ENCODE measurements at regions of chr7 and their contacts with region 1.

Region 1: DNA sequence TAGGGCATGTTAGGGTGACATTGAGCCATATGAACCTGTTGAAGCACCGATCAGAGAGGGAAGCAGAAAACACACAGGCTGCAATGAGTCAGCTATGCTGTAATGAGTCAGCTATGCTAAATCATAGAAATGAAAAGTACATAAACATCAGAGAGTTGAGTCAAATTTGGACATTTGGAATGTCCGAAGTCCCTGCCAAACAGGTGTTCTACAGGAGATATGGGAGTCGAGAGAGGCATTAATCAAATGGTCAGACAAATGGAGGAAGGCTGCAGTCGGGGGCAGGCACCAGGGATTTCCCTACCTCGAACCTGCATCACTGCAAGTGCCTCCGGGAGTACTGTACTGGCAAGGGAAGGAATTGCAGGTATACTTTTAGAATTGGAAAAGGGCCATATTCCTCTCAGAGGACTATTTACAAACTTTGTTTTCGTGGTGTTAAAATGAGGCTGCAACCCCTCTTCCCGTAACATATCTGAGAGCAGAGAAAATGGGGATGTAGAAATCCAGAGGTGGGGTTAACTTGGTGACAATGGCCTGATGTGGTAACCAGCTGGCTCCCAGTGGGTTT is 8.8 kb upstream of the ZC3HAV1 start:
- DNase-seq: peak in 2 of 14 experiments; percentile 39 to 55
- ATAC-seq: no peak
- H3K4me3 ChIP-seq: no peak overlapping the region
- H3K4me3 Mint-ChIP-seq: peak overlapping the region; percentile 28
- H3K27ac ChIP-seq: peak overlapping the region in 1 of 2 donors; percentile 17
- H3K27ac Mint-ChIP-seq: peak overlapping the region; percentile 70
- H3K4me1 ChIP-seq: peaks cover 24% of the 10 kb centered on the region
- H3K4me1 Mint-ChIP-seq: peaks cover 50% of the 10 kb centered on the region
- H3K27me3 ChIP-seq: no peaks in the 10 kb centered on the region
- H3K27me3 Mint-ChIP-seq: no peaks in the 10 kb centered on the region
- CTCF ChIP-seq: no peak

Region 2: DNA sequence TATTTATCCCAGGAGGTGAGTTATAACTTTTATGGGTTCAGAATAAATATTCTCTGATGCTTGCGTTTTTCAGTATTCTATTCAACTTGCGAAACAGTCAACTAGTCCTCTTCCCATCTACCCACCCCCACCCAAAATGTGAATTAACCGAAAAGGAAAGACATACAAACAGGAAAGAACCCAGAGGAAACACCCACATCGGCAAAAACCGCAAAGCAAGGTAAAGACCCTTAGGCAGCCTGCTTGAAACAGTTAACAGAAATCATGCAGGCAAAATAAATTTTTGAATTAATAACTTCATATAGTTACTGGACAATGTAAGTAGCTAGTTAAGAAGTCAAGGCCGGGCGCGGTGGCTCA is 14.2 kb before region 1 on chr7:
- CTCF ChIA-PET with region 1: interaction called, 3 read pairs
- POLR2A ChIA-PET with region 1: interaction called, 10 read pairs
- intact Hi-C with region 1: no loop called
- DNase-seq: peak in 5 of 14 experiments; percentile 31 to 76 (median 65)
- ATAC-seq: no peak
- H3K4me3 ChIP-seq: peak overlapping the region; percentile 97
- H3K4me3 Mint-ChIP-seq: peak overlapping the region; percentile 95
- H3K27ac ChIP-seq: peak overlapping the region; percentile 57 to 63
- H3K27ac Mint-ChIP-seq: peak overlapping the region; percentile 92
- H3K4me1 ChIP-seq: peaks cover 27% of the 10 kb centered on the region
- H3K4me1 Mint-ChIP-seq: peaks cover 52% of the 10 kb centered on the region
- H3K27me3 ChIP-seq: no peaks in the 10 kb centered on the region
- H3K27me3 Mint-ChIP-seq: no peaks in the 10 kb centered on the region
- CTCF ChIP-seq: no peak

Measured in CD4-positive, alpha-beta T cell (primary cell).